ENCODE measurements at regions of chr17 and their contacts with region 1.

Region 1: DNA sequence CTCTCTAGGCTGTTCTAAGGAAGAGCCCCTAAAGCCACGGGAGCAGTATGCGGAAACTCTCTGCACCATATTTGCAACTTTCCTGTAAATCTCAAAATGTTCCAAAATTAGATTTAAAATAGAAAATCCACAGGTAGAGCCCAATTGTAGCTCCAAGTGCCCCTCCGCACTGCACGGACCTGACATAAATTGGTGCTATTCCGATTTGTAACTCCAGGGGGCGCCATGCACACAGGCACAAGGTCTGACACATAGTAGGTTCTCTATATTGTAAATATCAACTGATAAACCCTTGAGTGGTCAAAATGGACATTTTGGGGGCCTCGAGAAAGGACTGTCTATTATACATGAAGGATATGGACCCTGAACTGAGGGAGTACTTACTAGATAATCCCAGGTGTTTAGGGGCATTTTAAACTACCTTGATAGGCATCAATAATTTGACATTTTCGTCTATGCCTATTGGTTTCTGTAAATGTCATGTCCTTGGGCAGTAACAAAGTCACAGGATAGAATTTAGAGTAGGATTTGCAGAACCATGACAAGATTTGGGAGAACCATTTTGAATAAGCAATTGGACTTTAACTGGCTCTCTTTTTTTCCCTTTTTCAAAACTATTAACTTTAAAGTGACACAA is 36.6 kb upstream of the TMEM132E start:
- DNase-seq: peak; percentile 73
- ATAC-seq: peak; percentile 68
- H3K4me3 Mint-ChIP-seq: no peak overlapping the region
- H3K27ac Mint-ChIP-seq: no peak overlapping the region
- H3K4me1 Mint-ChIP-seq: peaks cover 5% of the 10 kb centered on the region
- H3K27me3 Mint-ChIP-seq: peaks cover 14% of the 10 kb centered on the region; the same call in 1 of the 2 replicates
- CTCF ChIP-seq: peak; percentile 98

Region 2: GRCh38 chr17:34370997-34371395 is 171.8 kb before region 1 on chr17:
- CTCF ChIA-PET with region 1: no interaction called
- POLR2A ChIA-PET with region 1: no interaction called
- DNase-seq: no peak
- ATAC-seq: no peak
- H3K4me3 Mint-ChIP-seq: no peak overlapping the region
- H3K27ac Mint-ChIP-seq: no peak overlapping the region
- H3K4me1 Mint-ChIP-seq: peaks cover 19% of the 10 kb centered on the region
- H3K27me3 Mint-ChIP-seq: 0 out of 2 replicates have a peak, but pooled peaks cover 2% of the 10 kb centered on the region
- CTCF ChIP-seq: no peak

Region 3: GRCh38 chr17:34527908-34528470 is 14.8 kb before region 1 on chr17:
- CTCF ChIA-PET with region 1: interaction called, 37 read pairs
- POLR2A ChIA-PET with region 1: no interaction called
- DNase-seq: peak; percentile 61
- ATAC-seq: peak; percentile 94
- H3K4me3 Mint-ChIP-seq: no peak overlapping the region
- H3K27ac Mint-ChIP-seq: no peak overlapping the region
- H3K4me1 Mint-ChIP-seq: peaks cover 16% of the 10 kb centered on the region
- H3K27me3 Mint-ChIP-seq: no peaks in the 10 kb centered on the region; the same call in none of the 2 replicates
- CTCF ChIP-seq: peak; percentile 82

Region 4: DNA sequence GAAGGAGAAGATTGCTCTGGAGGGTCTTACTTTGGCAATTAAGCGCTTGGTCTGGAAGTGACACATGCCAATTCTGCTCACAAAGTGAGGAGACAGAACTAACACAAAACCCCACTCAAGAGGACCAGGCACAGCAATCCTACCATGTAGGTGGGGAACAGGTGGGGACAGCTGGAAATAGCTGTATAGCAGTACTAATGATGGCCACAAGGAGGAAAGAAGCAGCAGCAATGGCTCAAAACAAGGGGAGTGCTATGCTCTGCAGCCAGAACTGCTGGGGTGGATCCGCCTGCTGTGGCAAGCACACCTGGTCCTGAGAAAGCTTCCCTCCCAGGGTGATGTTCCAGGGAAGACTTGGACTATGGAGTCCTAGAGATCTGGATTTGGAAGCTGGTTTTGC is 19.6 kb after region 1 on chr17:
- CTCF ChIA-PET with region 1: interaction called, 13 read pairs
- POLR2A ChIA-PET with region 1: no interaction called
- DNase-seq: peak; percentile 48
- ATAC-seq: peak; percentile 94
- H3K4me3 Mint-ChIP-seq: no peak overlapping the region
- H3K27ac Mint-ChIP-seq: no peak overlapping the region
- H3K4me1 Mint-ChIP-seq: no peaks in the 10 kb centered on the region
- H3K27me3 Mint-ChIP-seq: peaks cover 19% of the 10 kb centered on the region
- CTCF ChIP-seq: peak; percentile 53

Region 5: GRCh38 chr17:34613064-34614019 is 70.5 kb after region 1 on chr17:
- CTCF ChIA-PET with region 1: interaction called, 17 read pairs
- POLR2A ChIA-PET with region 1: no interaction called
- DNase-seq: peak; percentile 45
- ATAC-seq: peak; percentile 40
- H3K4me3 Mint-ChIP-seq: no peak overlapping the region
- H3K27ac Mint-ChIP-seq: no peak overlapping the region
- H3K4me1 Mint-ChIP-seq: peaks cover 74% of the 10 kb centered on the region
- H3K27me3 Mint-ChIP-seq: peaks cover 12% of the 10 kb centered on the region; the same call in 1 of the 2 replicates
- CTCF ChIP-seq: no peak

Measured in WTC11 (cell line).